ENCODE measurements at regions of chr12 and their contacts with region 1.

Region 1: GRCh38 chr12:48668996-48669395 is 13.0 kb downstream of the KANSL2 start:
- DNase-seq: no peak
- H3K4me3 ChIP-seq: no peak overlapping the region
- H3K27ac ChIP-seq: no peak overlapping the region
- H3K4me1 ChIP-seq: no peaks in the 10 kb centered on the region
- H3K27me3 ChIP-seq: no peaks in the 10 kb centered on the region
- CTCF ChIP-seq: no peak
- POLR2A ChIP-seq: no peak

Region 2: DNA sequence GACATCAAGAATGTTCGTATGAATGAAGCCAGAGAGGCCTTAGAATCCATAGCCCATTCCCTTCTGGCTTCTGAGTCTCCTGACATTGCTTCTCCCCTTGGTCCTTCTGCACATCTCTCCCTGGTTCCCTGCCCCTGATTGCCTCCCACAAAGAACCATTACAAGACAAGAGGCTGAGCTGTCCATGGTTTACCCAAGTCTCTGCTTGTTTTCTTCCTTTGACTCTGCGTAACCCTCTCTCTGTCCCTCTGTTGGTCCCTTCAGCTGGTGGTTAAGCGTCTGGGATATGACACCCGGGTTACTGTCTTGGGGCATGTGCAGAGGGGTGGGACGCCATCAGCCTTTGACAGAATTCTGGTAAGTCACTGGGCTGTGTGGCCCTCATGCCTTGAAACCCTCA is 534.0 kb before region 1 on chr12:
- CTCF ChIA-PET with region 1: no interaction called
- POLR2A ChIA-PET with region 1: no interaction called
- dilution Hi-C with region 1: no loop called
- intact Hi-C with region 1: loop called (anchors 5 kb)
- DNase-seq: no peak
- H3K4me3 ChIP-seq: no peak overlapping the region
- H3K27ac ChIP-seq: no peak overlapping the region
- H3K4me1 ChIP-seq: no peaks in the 10 kb centered on the region
- H3K27me3 ChIP-seq: no peaks in the 10 kb centered on the region
- CTCF ChIP-seq: no peak
- POLR2A ChIP-seq: no peak

Measured in endothelial cell of umbilical vein (primary cell).